CD4-positive, alpha-beta memory T cell (primary cell): ENCODE measurements at regions of chr2 and their contacts with region 1.

Region 1: GRCh38 chr2:162301151-162301804 is 17.2 kb downstream of the IFIH1 start:
- DNase-seq: peak; percentile 44 to 61 (median 53)
- H3K4me3 ChIP-seq: no peak overlapping the region
- H3K4me3 Mint-ChIP-seq: no peak overlapping the region
- H3K27ac ChIP-seq: no peak overlapping the region
- H3K27ac Mint-ChIP-seq: no peak overlapping the region
- H3K4me1 ChIP-seq: peaks cover 6% of the 10 kb centered on the region
- H3K4me1 Mint-ChIP-seq: peaks cover 0 to 3% (median 2%) of the 10 kb centered on the region in 4 donors
- H3K27me3 ChIP-seq: no peaks in the 10 kb centered on the region
- H3K27me3 Mint-ChIP-seq: no peaks in the 10 kb centered on the region

Region 2: GRCh38 chr2:162153608-162154224 is 147.6 kb before region 1 on chr2:
- CTCF ChIA-PET with region 1: interaction called, 32 read pairs
- POLR2A ChIA-PET with region 1: no interaction called
- intact Hi-C with region 1: loop called (anchors 1 kb)
- DNase-seq: peak in 4 of 5 donors; percentile 55 to 58 (median 57)
- H3K4me3 ChIP-seq: no peak overlapping the region
- H3K4me3 Mint-ChIP-seq: peak overlapping the region in 5 of 8 donors; percentile 7 to 72 (median 35)
- H3K27ac ChIP-seq: no peak overlapping the region
- H3K27ac Mint-ChIP-seq: no peak overlapping the region
- H3K4me1 ChIP-seq: peaks cover 6% of the 10 kb centered on the region
- H3K4me1 Mint-ChIP-seq: peaks cover 0 to 5% (median 3%) of the 10 kb centered on the region in 4 donors
- H3K27me3 ChIP-seq: no peaks in the 10 kb centered on the region
- H3K27me3 Mint-ChIP-seq: peaks cover 14 to 16% of the 10 kb centered on the region in 2 donors

Region 3: GRCh38 chr2:162280654-162281053 is 20.6 kb before region 1 on chr2:
- CTCF ChIA-PET with region 1: interaction called, 28 read pairs
- POLR2A ChIA-PET with region 1: no interaction called
- intact Hi-C with region 1: no loop called
- DNase-seq: no peak
- H3K4me3 ChIP-seq: no peak overlapping the region
- H3K4me3 Mint-ChIP-seq: no peak overlapping the region
- H3K27ac ChIP-seq: no peak overlapping the region
- H3K27ac Mint-ChIP-seq: no peak overlapping the region
- H3K4me1 ChIP-seq: no peaks in the 10 kb centered on the region
- H3K4me1 Mint-ChIP-seq: peaks cover 0 to 2% (median 0%) of the 10 kb centered on the region in 4 donors
- H3K27me3 ChIP-seq: no peaks in the 10 kb centered on the region
- H3K27me3 Mint-ChIP-seq: no peaks in the 10 kb centered on the region

Region 4: GRCh38 chr2:162318328-162319180 is 17.3 kb after region 1 on chr2 and contains the start of gene IFIH1:
- CTCF ChIA-PET with region 1: interaction called, 141 read pairs
- POLR2A ChIA-PET with region 1: interaction called, 3 read pairs
- intact Hi-C with region 1: loop called (anchors 1 kb)
- DNase-seq: peak; percentile 82 to 93 (median 83)
- H3K4me3 ChIP-seq: peak within 1 kb of the TSS; percentile 93 to 97
- H3K4me3 Mint-ChIP-seq: peak within 1 kb of the TSS; percentile 93 to 100 (median 98)
- H3K27ac ChIP-seq: peak within 1 kb of the TSS; percentile 97
- H3K27ac Mint-ChIP-seq: peak within 1 kb of the TSS; percentile 98 to 100 (median 99)
- H3K4me1 ChIP-seq: peaks cover 56% of the 10 kb centered on the region
- H3K4me1 Mint-ChIP-seq: peaks cover 48 to 65% (median 57%) of the 10 kb centered on the region in 4 donors
- H3K27me3 ChIP-seq: no peaks in the 10 kb centered on the region
- H3K27me3 Mint-ChIP-seq: no peaks in the 10 kb centered on the region
- total RNA-seq, gene IFIH1: 30.1 to 31.2 TPM

Region 5: DNA sequence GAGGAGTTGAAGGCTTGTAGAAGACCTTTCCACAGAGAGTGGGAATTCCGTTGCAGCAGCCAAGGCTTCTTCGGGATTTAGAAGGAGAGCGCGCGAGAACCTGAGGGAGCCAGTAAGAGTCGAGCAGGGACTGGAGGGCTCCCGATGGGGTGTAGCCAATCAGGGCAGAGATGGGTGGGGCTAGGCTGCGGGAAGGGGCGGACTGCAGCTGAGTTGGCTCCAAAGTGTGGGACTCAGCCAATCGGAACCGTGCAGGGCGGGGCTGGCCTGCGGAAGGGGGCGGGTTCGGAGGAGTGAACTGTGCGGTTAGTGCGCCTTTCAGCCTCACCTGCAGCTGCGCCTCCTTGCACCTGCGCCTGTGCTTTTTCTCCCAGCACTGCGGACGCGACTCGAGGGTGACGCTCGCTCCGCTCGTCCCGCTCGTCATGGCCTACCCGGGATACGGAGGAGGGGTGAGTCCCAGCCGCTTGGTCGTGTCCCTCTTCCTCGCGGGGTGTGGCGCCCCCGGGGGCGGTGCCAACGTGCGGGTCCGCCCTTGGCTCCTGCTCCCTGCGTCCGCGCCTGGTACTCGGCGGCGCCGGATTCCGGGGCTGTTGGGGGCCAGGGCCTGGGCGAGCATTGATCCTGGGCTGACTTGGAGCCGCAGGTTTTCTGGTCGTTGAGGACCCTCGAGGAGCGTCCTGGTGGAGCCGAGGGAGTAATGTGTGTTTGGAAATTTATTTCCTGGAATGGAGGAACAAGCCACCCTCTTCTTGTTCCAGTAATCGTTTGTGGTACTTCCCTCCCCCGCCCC is 42.7 kb after region 1 on chr2 and contains the start of gene GCA:
- CTCF ChIA-PET with region 1: interaction called, 15 read pairs
- POLR2A ChIA-PET with region 1: no interaction called
- intact Hi-C with region 1: no loop called
- DNase-seq: peak; percentile 97 to 98 (median 98)
- H3K4me3 ChIP-seq: peak within 1 kb of the TSS; percentile 50 to 90
- H3K4me3 Mint-ChIP-seq: peak within 1 kb of the TSS; percentile 87 to 97 (median 91)
- H3K27ac ChIP-seq: peak within 1 kb of the TSS; percentile 60
- H3K27ac Mint-ChIP-seq: peak within 1 kb of the TSS; percentile 61 to 96 (median 91)
- H3K4me1 ChIP-seq: peaks cover 10% of the 10 kb centered on the region
- H3K4me1 Mint-ChIP-seq: peaks cover 11 to 20% (median 16%) of the 10 kb centered on the region in 4 donors
- H3K27me3 ChIP-seq: no peaks in the 10 kb centered on the region
- H3K27me3 Mint-ChIP-seq: no peaks in the 10 kb centered on the region
- total RNA-seq, gene GCA: 11.5 to 11.9 TPM

Region 6: GRCh38 chr2:163785162-163785561 is 1483.9 kb after region 1 on chr2:
- CTCF ChIA-PET with region 1: no interaction called
- POLR2A ChIA-PET with region 1: no interaction called
- intact Hi-C with region 1: no loop called
- DNase-seq: no peak
- H3K4me3 ChIP-seq: no peak overlapping the region
- H3K4me3 Mint-ChIP-seq: no peak overlapping the region
- H3K27ac ChIP-seq: no peak overlapping the region
- H3K27ac Mint-ChIP-seq: no peak overlapping the region
- H3K4me1 ChIP-seq: no peaks in the 10 kb centered on the region
- H3K4me1 Mint-ChIP-seq: no peaks in the 10 kb centered on the region
- H3K27me3 ChIP-seq: no peaks in the 10 kb centered on the region
- H3K27me3 Mint-ChIP-seq: no peaks in the 10 kb centered on the region